ENCODE measurements at regions of chr2 and their contacts with region 1.

Region 1: GRCh38 chr2:218568190-218569037 is at the starts of genes CNOT9 and USP37:
- DNase-seq: peak; percentile 100
- H3K4me3 ChIP-seq: peak within 1 kb of the TSS; percentile 72 to 74 (median 74)
- H3K27ac ChIP-seq: peak within 1 kb of the TSS; percentile 81 to 91 (median 89)
- H3K4me1 ChIP-seq: peaks cover 16 to 27% of the 10 kb centered on the region in 2 donors
- H3K27me3 ChIP-seq: no peaks in the 10 kb centered on the region
- CTCF ChIP-seq: peak in 1 of 6 experiments; percentile 13
- POLR2A ChIP-seq: peak in 1 of 2 donors; percentile 75
- total RNA-seq, gene CNOT9: 34.7 to 48.5 (median 38.5) TPM
- total RNA-seq, gene USP37: 10.6 to 22.4 (median 15.8) TPM

Region 2: DNA sequence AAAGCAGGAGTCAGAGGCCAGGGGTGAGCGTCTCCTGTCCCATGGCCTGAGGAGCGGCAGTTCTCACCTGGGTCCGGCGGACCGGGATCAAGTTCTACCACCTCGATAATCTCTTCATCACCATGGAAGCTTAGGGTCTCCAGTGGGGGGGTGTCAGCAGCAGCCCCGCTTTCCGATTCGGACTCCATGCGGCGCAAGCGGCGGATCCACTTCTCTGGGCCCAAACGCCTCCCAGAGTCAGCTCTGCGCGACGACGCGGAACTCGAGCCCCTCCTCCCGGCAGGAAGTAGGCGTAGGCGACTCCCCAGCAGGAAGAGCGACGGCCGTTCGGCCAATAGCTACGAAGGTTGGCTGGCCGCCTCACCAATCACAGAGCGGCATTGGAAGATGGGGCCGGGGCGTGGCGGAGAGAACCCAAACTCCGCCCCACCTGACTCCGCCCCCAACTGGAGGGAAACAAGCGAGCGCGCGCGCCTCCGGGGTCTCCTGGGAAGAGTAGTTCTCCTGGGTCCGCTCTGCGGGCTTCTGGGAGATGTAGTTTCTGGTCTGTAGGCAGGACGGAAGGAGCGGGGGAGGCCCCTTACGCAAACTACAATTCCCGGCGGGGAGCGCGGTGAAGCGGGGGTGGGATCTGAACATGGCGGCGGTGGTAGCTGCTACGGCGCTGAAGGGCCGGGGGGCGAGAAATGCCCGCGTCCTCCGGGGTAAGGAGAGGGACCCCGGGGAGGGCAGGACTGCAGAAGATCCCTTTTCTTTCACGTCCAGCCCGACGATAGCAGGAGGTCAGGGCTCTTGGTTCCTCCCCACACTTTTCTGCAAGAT is 298.3 kb before region 1 on chr2 and contains the starts of genes AAMP and PNKD:
- intact Hi-C with region 1: loop called (anchors 10 kb)
- DNase-seq: peak; percentile 100
- H3K4me3 ChIP-seq: peak within 1 kb of the TSS; percentile 29 to 88 (median 85)
- H3K27ac ChIP-seq: peak within 1 kb of the TSS; percentile 55 to 84 (median 83)
- H3K4me1 ChIP-seq: peaks cover 32 to 46% of the 10 kb centered on the region in 2 donors
- H3K27me3 ChIP-seq: no peaks in the 10 kb centered on the region
- CTCF ChIP-seq: peak in 1 of 6 experiments; percentile 13
- POLR2A ChIP-seq: peak in 1 of 2 donors; percentile 79
- total RNA-seq, gene AAMP: 86.9 to 175 (median 121) TPM
- total RNA-seq, gene PNKD: 57.0 to 110 (median 81.8) TPM

Region 3: DNA sequence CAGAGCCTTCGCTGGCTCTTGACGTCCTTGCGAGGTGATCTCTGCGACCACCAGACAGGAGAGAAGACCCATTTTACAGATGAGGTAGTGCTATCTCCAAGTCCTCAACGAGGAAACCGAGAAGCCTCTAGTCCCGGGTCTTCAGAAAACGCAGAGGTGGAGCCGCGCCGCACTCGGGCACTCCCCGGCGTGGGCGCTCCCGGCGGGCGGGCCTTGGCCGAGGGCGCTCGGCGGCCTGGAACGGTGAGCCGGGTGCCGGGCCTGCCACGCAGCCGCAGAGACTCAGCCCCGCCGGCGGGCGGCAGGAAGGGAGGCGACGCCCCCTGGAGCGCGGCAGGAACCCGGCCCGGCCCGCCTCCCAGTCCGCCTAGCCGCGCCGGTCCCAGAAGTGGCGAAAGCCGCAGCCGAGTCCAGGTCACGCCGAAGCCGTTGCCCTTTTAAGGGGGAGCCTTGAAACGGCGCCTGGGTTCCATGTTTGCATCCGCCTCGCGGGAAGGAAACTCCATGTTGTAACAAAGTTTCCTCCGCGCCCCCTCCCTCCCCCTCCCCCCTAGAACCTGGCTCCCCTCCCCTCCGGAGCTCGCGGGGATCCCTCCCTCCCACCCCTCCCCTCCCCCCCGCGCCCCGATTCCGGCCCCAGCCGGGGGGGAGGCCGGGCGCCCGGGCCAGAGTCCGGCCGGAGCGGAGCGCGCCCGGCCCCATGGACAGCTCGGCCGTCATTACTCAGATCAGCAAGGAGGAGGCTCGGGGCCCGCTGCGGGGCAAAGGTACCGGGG is 168.8 kb before region 1 on chr2 and contains the start of gene CTDSP1:
- intact Hi-C with region 1: loop called (anchors 5 kb)
- DNase-seq: peak; percentile 98 to 99
- H3K4me3 ChIP-seq: peak within 1 kb of the TSS; percentile 43 to 100 (median 100)
- H3K27ac ChIP-seq: peak within 1 kb of the TSS; percentile 99 to 100 (median 99)
- H3K4me1 ChIP-seq: peaks cover 41 to 48% of the 10 kb centered on the region in 2 donors
- H3K27me3 ChIP-seq: no peaks in the 10 kb centered on the region
- CTCF ChIP-seq: peak in 3 of 6 experiments; percentile 18 to 34 (median 20)
- POLR2A ChIP-seq: peak; percentile 71 to 87
- total RNA-seq, gene CTDSP1: 105 to 152 (median 127) TPM

Region 4: GRCh38 chr2:218466016-218466521 is 102.3 kb before region 1 on chr2:
- intact Hi-C with region 1: no loop called
- DNase-seq: no peak
- H3K4me3 ChIP-seq: no peak overlapping the region
- H3K27ac ChIP-seq: peak overlapping the region in 1 of 3 donors; percentile 13
- H3K4me1 ChIP-seq: peaks cover 0 to 11% of the 10 kb centered on the region in 2 donors
- H3K27me3 ChIP-seq: no peaks in the 10 kb centered on the region
- CTCF ChIP-seq: peak in 4 of 6 experiments; percentile 29 to 60 (median 51)
- POLR2A ChIP-seq: no peak

Region 5: DNA sequence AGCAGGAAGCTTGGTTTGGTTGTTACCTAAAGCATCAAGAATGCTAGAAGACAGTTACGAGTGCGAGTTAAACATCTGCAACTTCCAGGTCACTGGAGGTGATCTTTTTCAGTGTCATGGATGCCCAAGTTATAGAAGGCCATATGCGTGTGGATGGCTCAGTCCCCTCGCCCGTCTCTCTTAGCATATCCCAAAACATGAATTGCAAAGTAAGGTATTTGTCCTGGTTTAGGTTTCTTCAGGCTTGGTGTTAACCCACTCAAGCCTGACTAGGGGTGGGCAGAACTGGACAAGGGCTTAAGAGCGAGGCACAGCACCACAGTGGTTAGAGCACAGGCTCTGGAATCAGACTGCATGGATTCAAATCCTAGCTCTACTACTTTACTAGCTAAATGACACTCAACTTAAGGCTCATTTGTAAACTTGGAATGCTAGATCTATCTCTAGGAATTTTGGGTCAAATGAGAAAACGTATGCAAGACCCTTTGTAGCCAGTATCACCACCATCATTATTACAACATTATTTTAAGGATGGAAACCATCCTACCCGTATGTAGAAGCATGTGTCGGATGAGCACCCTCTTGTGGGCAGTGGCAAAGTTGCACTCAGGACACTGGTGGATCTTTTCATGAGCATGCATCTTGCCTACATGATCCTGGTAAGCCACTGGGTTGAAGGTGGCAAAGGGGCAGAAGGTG is 79.8 kb after region 1 on chr2:
- intact Hi-C with region 1: loop called (anchors 10 kb)
- DNase-seq: peak; percentile 53 to 57
- H3K4me3 ChIP-seq: no peak overlapping the region
- H3K27ac ChIP-seq: no peak overlapping the region
- H3K4me1 ChIP-seq: no peaks in the 10 kb centered on the region
- H3K27me3 ChIP-seq: no peaks in the 10 kb centered on the region
- CTCF ChIP-seq: peak; percentile 52 to 85 (median 72)
- POLR2A ChIP-seq: no peak

Region 6: GRCh38 chr2:218806346-218806978 is 238.0 kb after region 1 on chr2:
- intact Hi-C with region 1: no loop called
- DNase-seq: peak; percentile 89 to 90
- H3K4me3 ChIP-seq: no peak overlapping the region
- H3K27ac ChIP-seq: peak overlapping the region; percentile 69 to 79 (median 70)
- H3K4me1 ChIP-seq: peaks cover 11 to 24% of the 10 kb centered on the region in 2 donors
- H3K27me3 ChIP-seq: no peaks in the 10 kb centered on the region
- CTCF ChIP-seq: no peak
- POLR2A ChIP-seq: no peak

Region 7: GRCh38 chr2:219253753-219254590 is 685.6 kb after region 1 on chr2 and contains the start of gene TUBA4A:
- intact Hi-C with region 1: no loop called
- DNase-seq: peak; percentile 88 to 89
- H3K4me3 ChIP-seq: peak within 1 kb of the TSS; percentile 24 to 62 (median 49)
- H3K27ac ChIP-seq: peak within 1 kb of the TSS; percentile 18 to 49 (median 25)
- H3K4me1 ChIP-seq: peaks cover 28 to 43% of the 10 kb centered on the region in 2 donors
- H3K27me3 ChIP-seq: no peaks in the 10 kb centered on the region
- CTCF ChIP-seq: peak in 2 of 6 experiments; percentile 6 to 20
- POLR2A ChIP-seq: peak; percentile 48 to 97
- total RNA-seq, gene TUBA4A: 21.0 to 72.4 (median 34.8) TPM